Panc1 (cell line): ENCODE measurements at regions of chr2 and their contacts with region 1.

Region 1: GRCh38 chr2:128008074-128008672 is 19.7 kb downstream of the SAP130 start:
- DNase-seq: no peak
- ATAC-seq: no peak; the same call in 1 of the 2 replicates
- H3K4me3 ChIP-seq: no peak overlapping the region
- H3K27ac ChIP-seq: no peak overlapping the region
- H3K4me1 ChIP-seq: no peaks in the 10 kb centered on the region
- H3K27me3 ChIP-seq: no peaks in the 10 kb centered on the region
- CTCF ChIP-seq: no peak

Region 2: DNA sequence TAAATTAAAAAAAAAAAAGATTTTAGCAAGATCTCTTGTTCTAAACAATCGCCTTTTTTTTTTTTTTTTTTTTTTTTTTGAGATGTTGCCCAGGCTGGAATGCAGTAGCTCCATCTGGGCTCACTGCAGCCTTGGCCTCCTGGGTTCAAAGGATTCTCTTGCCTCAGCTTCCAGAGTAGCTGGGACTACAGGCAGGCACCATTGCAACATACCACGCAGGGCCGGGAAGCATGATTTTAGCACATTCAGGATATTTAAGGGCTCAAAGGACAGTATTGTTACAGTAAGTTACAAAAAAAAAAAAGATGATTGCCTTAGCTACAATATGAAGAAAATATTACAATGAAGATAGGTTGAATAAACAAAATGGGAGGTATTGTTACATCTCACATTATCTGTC is 49.2 kb after region 1 on chr2:
- CTCF ChIA-PET with region 1: no interaction called
- POLR2A ChIA-PET with region 1: interaction called, 21 read pairs
- in situ Hi-C with region 1: no loop called
- intact Hi-C with region 1: no loop called
- DNase-seq: no peak
- ATAC-seq: no peak
- H3K4me3 ChIP-seq: no peak overlapping the region
- H3K27ac ChIP-seq: no peak overlapping the region
- H3K4me1 ChIP-seq: no peaks in the 10 kb centered on the region
- H3K27me3 ChIP-seq: no peaks in the 10 kb centered on the region; the same call in 1 of the 2 replicates
- CTCF ChIP-seq: no peak

Region 3: GRCh38 chr2:129820908-129821307 is 1812.7 kb after region 1 on chr2:
- CTCF ChIA-PET with region 1: no interaction called
- POLR2A ChIA-PET with region 1: no interaction called
- in situ Hi-C with region 1: no loop called
- intact Hi-C with region 1: no loop called
- DNase-seq: no peak
- ATAC-seq: no peak
- H3K4me3 ChIP-seq: no peak overlapping the region
- H3K27ac ChIP-seq: no peak overlapping the region
- H3K4me1 ChIP-seq: no peaks in the 10 kb centered on the region
- H3K27me3 ChIP-seq: no peaks in the 10 kb centered on the region
- CTCF ChIP-seq: no peak